CD4-positive, alpha-beta memory T cell (primary cell): ENCODE measurements at regions of chr1 and their contacts with region 1.

Region 1: GRCh38 chr1:222455188-222455879 is 92.6 kb downstream of the HHIPL2 start:
- DNase-seq: peak; percentile 76 to 81 (median 80)
- H3K4me3 ChIP-seq: no peak overlapping the region
- H3K4me3 Mint-ChIP-seq: peak overlapping the region in 7 of 8 donors; percentile 5 to 69 (median 46)
- H3K27ac ChIP-seq: no peak overlapping the region
- H3K27ac Mint-ChIP-seq: peak overlapping the region in 5 of 7 donors; percentile 2 to 87 (median 24)
- H3K4me1 ChIP-seq: peaks cover 7% of the 10 kb centered on the region
- H3K4me1 Mint-ChIP-seq: peaks cover 7 to 21% (median 18%) of the 10 kb centered on the region in 4 donors
- H3K27me3 ChIP-seq: no peaks in the 10 kb centered on the region
- H3K27me3 Mint-ChIP-seq: peaks cover 0 to 1% of the 10 kb centered on the region in 2 donors

Region 2: DNA sequence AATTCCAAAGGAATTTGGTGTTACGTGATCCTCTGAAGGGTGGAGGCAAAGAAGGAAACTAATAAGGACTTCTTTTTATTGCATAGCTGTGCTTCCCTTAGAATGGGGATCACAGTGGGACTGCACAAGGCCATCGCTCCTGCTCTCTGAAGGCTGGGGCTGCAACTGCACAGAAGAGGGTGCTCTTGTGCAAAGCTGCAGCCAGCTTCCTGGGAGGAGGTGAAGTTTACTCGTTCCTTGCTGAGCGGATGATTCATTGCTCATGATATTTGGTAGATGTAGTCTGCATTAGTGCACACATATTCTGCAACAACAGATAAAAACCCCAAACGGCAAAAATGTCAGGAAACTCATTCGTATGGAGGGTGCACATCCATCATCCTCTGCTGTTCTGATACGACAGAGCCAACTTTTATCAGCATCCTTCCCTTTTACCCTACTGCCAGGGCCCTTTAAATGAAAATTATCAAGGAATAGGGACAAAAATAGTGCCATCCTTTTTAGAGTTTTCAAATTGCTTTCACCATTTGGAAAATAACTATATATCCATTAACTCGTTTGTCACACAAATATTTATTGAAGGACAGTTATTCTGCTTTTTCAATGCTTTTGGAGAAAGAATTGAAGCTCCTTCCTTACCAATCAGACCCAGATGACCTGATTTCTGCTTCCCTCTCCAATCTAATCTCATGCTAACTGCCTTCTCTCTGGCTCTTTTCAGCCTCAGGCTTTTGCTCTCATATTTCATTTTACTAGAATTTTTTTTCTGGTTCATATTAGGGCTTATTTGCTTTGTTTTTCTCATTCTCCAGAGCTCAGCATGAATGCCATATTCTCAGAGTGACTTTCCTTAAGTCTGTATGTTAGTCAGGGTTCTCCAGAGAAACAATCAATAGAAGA is 977.0 kb before region 1 on chr1:
- CTCF ChIA-PET with region 1: interaction called, 17 read pairs
- POLR2A ChIA-PET with region 1: no interaction called
- intact Hi-C with region 1: loop called (anchors 1 kb)
- DNase-seq: peak; percentile 38 to 47 (median 45)
- H3K4me3 ChIP-seq: no peak overlapping the region
- H3K4me3 Mint-ChIP-seq: no peak overlapping the region
- H3K27ac ChIP-seq: no peak overlapping the region
- H3K27ac Mint-ChIP-seq: no peak overlapping the region
- H3K4me1 ChIP-seq: no peaks in the 10 kb centered on the region
- H3K4me1 Mint-ChIP-seq: peaks cover 0 to 2% (median under 1%) of the 10 kb centered on the region in 4 donors
- H3K27me3 ChIP-seq: no peaks in the 10 kb centered on the region
- H3K27me3 Mint-ChIP-seq: peaks cover 0 to 7% of the 10 kb centered on the region in 2 donors

Region 3: GRCh38 chr1:222009105-222009730 is 446.1 kb before region 1 on chr1:
- CTCF ChIA-PET with region 1: interaction called, 5 read pairs
- POLR2A ChIA-PET with region 1: no interaction called
- intact Hi-C with region 1: loop called (anchors 1 kb)
- DNase-seq: peak in 4 of 5 donors; percentile 17 to 26 (median 18)
- H3K4me3 ChIP-seq: no peak overlapping the region
- H3K4me3 Mint-ChIP-seq: peak overlapping the region in 2 of 8 donors; percentile 49 to 52
- H3K27ac ChIP-seq: no peak overlapping the region
- H3K27ac Mint-ChIP-seq: peak overlapping the region in 1 of 7 donors; percentile 19
- H3K4me1 ChIP-seq: no peaks in the 10 kb centered on the region
- H3K4me1 Mint-ChIP-seq: peaks cover 0 to 2% (median 0%) of the 10 kb centered on the region in 4 donors
- H3K27me3 ChIP-seq: no peaks in the 10 kb centered on the region
- H3K27me3 Mint-ChIP-seq: peaks cover 0 to 2% of the 10 kb centered on the region in 2 donors

Region 4: DNA sequence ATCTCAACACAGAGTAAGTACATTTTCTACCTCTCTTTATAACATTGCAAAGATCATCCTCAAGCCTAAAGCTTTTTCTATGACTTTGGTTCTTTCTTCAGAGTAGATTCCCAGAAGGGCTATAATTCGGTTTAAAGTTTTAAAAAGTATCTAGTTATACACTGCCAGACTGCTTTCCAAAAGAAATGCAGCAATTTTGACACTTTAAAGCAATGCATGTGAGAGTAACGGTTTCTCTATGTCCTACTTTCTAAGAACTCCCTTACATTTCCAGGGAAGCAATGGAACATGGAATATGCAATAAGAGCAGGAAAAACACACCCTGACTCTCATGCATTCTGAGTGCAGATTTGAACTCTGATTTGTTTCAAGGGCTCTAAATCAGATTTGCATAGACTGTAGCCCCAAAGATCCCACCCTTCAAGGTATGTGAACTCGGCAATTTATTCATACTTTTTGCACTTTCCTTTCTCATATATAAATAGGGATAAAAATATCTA is 239.0 kb before region 1 on chr1:
- CTCF ChIA-PET with region 1: interaction called, 4 read pairs
- POLR2A ChIA-PET with region 1: no interaction called
- intact Hi-C with region 1: loop called (anchors 10 kb)
- DNase-seq: no peak
- H3K4me3 ChIP-seq: no peak overlapping the region
- H3K4me3 Mint-ChIP-seq: no peak overlapping the region
- H3K27ac ChIP-seq: no peak overlapping the region
- H3K27ac Mint-ChIP-seq: no peak overlapping the region
- H3K4me1 ChIP-seq: no peaks in the 10 kb centered on the region
- H3K4me1 Mint-ChIP-seq: no peaks in the 10 kb centered on the region
- H3K27me3 ChIP-seq: no peaks in the 10 kb centered on the region
- H3K27me3 Mint-ChIP-seq: peaks cover 0 to 1% of the 10 kb centered on the region in 2 donors

Region 5: DNA sequence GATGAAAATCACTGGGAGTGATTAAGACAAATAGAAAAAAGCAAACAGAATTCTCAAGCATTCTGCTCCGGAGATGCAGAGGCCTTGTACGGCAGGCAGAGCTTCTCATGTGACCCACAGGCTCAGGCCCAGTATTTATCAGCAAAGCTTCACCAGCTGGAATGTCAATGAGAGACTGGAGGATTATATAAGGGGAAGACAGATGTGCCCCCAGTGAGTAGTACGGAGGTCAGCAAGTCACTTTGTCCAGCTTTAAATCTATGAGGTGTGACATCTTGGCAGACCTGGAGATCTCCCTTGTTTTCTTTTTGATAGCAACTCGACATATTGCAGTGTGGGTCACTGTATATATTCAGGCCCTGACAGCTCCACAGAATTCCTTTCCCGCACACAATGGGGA is 14.3 kb before region 1 on chr1:
- CTCF ChIA-PET with region 1: interaction called, 55 read pairs
- POLR2A ChIA-PET with region 1: no interaction called
- intact Hi-C with region 1: no loop called
- DNase-seq: no peak
- H3K4me3 ChIP-seq: no peak overlapping the region
- H3K4me3 Mint-ChIP-seq: no peak overlapping the region
- H3K27ac ChIP-seq: no peak overlapping the region
- H3K27ac Mint-ChIP-seq: no peak overlapping the region
- H3K4me1 ChIP-seq: peaks cover 17% of the 10 kb centered on the region
- H3K4me1 Mint-ChIP-seq: peaks cover 20 to 38% (median 32%) of the 10 kb centered on the region in 4 donors
- H3K27me3 ChIP-seq: no peaks in the 10 kb centered on the region
- H3K27me3 Mint-ChIP-seq: peaks cover 0 to 1% of the 10 kb centered on the region in 2 donors